CD4-positive, alpha-beta memory T cell (primary cell): ENCODE measurements at regions of chr1 and their contacts with region 1.

Region 1: GRCh38 chr1:40508375-40509341 is at the start of gene EXO5:
- DNase-seq: peak; percentile 69 to 79 (median 75)
- H3K4me3 ChIP-seq: peak within 1 kb of the TSS; percentile 71 to 79
- H3K4me3 Mint-ChIP-seq: peak within 1 kb of the TSS; percentile 86 to 93 (median 92)
- H3K27ac ChIP-seq: peak within 1 kb of the TSS; percentile 60
- H3K27ac Mint-ChIP-seq: peak within 1 kb of the TSS; percentile 49 to 95 (median 87)
- H3K4me1 ChIP-seq: peaks cover 8% of the 10 kb centered on the region
- H3K4me1 Mint-ChIP-seq: peaks cover 9 to 15% (median 13%) of the 10 kb centered on the region in 4 donors
- H3K27me3 ChIP-seq: no peaks in the 10 kb centered on the region
- H3K27me3 Mint-ChIP-seq: no peaks in the 10 kb centered on the region
- total RNA-seq, gene EXO5: 10.1 to 10.7 TPM

Region 2: GRCh38 chr1:40449684-40450494 is 58.8 kb before region 1 on chr1 and contains the start of gene ZFP69B:
- CTCF ChIA-PET with region 1: no interaction called
- POLR2A ChIA-PET with region 1: interaction called, 16 read pairs
- intact Hi-C with region 1: loop called (anchors 1 kb)
- DNase-seq: peak; percentile 81 to 86 (median 82)
- H3K4me3 ChIP-seq: peak within 1 kb of the TSS; percentile 75 to 82
- H3K4me3 Mint-ChIP-seq: peak within 1 kb of the TSS; percentile 86 to 96 (median 93)
- H3K27ac ChIP-seq: peak within 1 kb of the TSS; percentile 55
- H3K27ac Mint-ChIP-seq: peak within 1 kb of the TSS; percentile 76 to 95 (median 89)
- H3K4me1 ChIP-seq: peaks cover 18% of the 10 kb centered on the region
- H3K4me1 Mint-ChIP-seq: peaks cover 18 to 25% (median 21%) of the 10 kb centered on the region in 4 donors
- H3K27me3 ChIP-seq: no peaks in the 10 kb centered on the region
- H3K27me3 Mint-ChIP-seq: no peaks in the 10 kb centered on the region
- total RNA-seq, gene ZFP69B: 7.5 to 7.9 TPM

Region 3: DNA sequence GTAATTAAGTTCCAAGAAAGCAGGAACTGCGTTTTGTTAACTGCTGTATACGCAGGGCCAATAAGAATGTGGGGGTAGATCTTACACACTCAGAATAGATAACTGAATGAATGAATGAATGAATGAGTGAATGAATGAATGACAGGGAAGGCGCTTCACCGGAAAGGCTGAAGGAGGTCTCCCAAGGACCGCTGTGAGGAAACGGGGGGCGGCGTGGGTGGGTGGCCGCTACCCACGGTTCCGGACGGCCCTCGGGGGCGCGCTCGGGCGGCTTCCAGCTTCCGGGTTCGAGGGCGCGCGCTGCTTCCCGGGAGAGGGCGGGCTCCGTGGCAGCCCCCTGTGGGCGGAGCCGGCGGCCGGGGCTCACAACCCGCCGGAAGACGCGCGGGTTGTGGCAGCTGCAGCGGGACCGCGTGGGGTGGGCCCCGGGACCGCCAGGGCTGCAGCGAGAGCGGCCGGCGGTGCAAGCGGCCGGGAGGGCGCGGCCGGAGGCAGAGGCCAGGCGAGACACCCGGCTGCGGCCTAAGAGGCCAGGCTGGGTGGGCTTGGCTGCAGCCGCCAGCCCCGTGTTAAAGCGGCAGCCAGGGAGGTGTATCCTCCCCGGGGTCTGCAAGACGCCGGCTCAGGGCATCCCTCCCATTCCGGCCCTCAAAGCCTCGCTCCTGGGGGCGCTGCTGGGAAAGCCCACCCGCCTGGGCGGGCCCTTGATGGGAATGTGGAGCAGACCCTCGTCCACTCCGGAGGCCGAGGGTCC is 31.6 kb before region 1 on chr1 and contains the start of gene ZFP69:
- CTCF ChIA-PET with region 1: no interaction called
- POLR2A ChIA-PET with region 1: interaction called, 20 read pairs
- intact Hi-C with region 1: loop called (anchors 1 kb)
- DNase-seq: peak; percentile 60 to 72 (median 67)
- H3K4me3 ChIP-seq: peak within 1 kb of the TSS; percentile 61 to 70
- H3K4me3 Mint-ChIP-seq: peak within 1 kb of the TSS; percentile 88 to 97 (median 93)
- H3K27ac ChIP-seq: peak within 1 kb of the TSS; percentile 52
- H3K27ac Mint-ChIP-seq: peak within 1 kb of the TSS; percentile 85 to 91 (median 88)
- H3K4me1 ChIP-seq: peaks cover 13% of the 10 kb centered on the region
- H3K4me1 Mint-ChIP-seq: peaks cover 16 to 26% (median 22%) of the 10 kb centered on the region in 4 donors
- H3K27me3 ChIP-seq: no peaks in the 10 kb centered on the region
- H3K27me3 Mint-ChIP-seq: no peaks in the 10 kb centered on the region
- total RNA-seq, gene ZFP69: 3.3 to 4.3 TPM

Region 4: DNA sequence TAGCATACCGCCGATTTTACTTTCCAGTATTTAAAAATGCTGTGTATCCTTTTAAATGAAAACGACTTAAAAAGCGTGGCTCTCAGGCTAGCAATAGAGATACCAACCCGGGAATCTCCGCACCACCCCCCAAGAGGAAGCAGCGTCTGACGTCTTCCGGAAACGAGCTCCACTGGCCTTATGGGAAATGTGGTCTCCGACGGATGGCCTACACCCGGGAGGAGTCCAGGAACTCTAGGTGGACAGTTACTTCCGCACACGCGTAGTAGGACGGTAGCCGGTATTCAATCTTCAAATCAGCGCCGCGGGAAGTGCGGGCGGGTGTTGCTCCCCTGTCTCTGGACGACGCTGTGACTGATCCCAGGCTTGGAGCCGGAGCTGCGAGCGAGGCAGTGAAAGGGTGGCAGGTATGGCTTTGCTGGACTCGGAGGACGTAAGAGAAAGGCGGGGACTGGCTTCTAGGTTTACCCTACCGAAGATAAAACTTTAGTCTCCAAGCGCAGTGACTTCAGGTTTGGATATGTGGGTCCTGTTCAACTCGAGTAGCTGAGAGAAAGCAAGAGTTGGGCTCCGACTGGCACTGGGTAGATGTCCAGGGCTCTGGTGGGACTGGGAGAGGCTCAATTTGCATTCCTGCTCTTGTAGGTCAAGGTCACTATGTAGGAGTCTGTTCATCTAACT is 22.9 kb after region 1 on chr1 and contains the start of gene ZNF684:
- CTCF ChIA-PET with region 1: interaction called, 8 read pairs
- POLR2A ChIA-PET with region 1: interaction called, 25 read pairs
- intact Hi-C with region 1: loop called (anchors 1 kb)
- DNase-seq: peak; percentile 82 to 92 (median 84)
- H3K4me3 ChIP-seq: peak within 1 kb of the TSS; percentile 19 to 90
- H3K4me3 Mint-ChIP-seq: peak within 1 kb of the TSS; percentile 94 to 100 (median 98)
- H3K27ac ChIP-seq: peak within 1 kb of the TSS; percentile 65
- H3K27ac Mint-ChIP-seq: peak within 1 kb of the TSS; percentile 84 to 100 (median 96)
- H3K4me1 ChIP-seq: peaks cover 21% of the 10 kb centered on the region
- H3K4me1 Mint-ChIP-seq: peaks cover 20 to 26% (median 23%) of the 10 kb centered on the region in 4 donors
- H3K27me3 ChIP-seq: no peaks in the 10 kb centered on the region
- H3K27me3 Mint-ChIP-seq: peaks cover 5 to 6% of the 10 kb centered on the region in 2 donors
- total RNA-seq, gene ZNF684: 4.4 to 5.5 TPM